ENCODE measurements at regions of chr12 and their contacts with region 1.

Region 1: GRCh38 chr12:13592063-13592942 is 389.1 kb downstream of the GRIN2B start:
- DNase-seq: peak; percentile 51
- ATAC-seq: peak; percentile 86
- H3K4me3 ChIP-seq: no peak overlapping the region
- H3K27ac ChIP-seq: no peak overlapping the region; the same call in 1 of the 2 replicates
- H3K4me1 ChIP-seq: no peaks in the 10 kb centered on the region; the same call in 1 of the 2 replicates
- H3K27me3 ChIP-seq: no peaks in the 10 kb centered on the region
- CTCF ChIP-seq: no peak
- EP300 ChIP-seq: peak; percentile 72 to 81; a peak in 3 of 4 replicates
- POLR2A ChIP-seq: no peak
- RAD21 ChIP-seq: no peak

Region 2: GRCh38 chr12:13472690-13473089 is 119.6 kb before region 1 on chr12:
- CTCF ChIA-PET with region 1: no interaction called
- POLR2A ChIA-PET with region 1: no interaction called
- RAD21 ChIA-PET with region 1: interaction called, 7 read pairs
- SMC1A ChIA-PET with region 1: interaction called, 8 read pairs
- in situ Hi-C with region 1: no loop called
- intact Hi-C with region 1: loop called (anchors 5 kb)
- DNase-seq: peak; percentile 65
- ATAC-seq: peak; percentile 96
- H3K4me3 ChIP-seq: no peak overlapping the region
- H3K27ac ChIP-seq: peak overlapping the region; percentile 68
- H3K4me1 ChIP-seq: peaks cover 13% of the 10 kb centered on the region
- H3K27me3 ChIP-seq: no peaks in the 10 kb centered on the region
- CTCF ChIP-seq: no peak
- EP300 ChIP-seq: peak in 1 of 2 experiments; percentile 72; a peak in 1 of 4 replicates
- POLR2A ChIP-seq: no peak
- RAD21 ChIP-seq: no peak

Region 3: DNA sequence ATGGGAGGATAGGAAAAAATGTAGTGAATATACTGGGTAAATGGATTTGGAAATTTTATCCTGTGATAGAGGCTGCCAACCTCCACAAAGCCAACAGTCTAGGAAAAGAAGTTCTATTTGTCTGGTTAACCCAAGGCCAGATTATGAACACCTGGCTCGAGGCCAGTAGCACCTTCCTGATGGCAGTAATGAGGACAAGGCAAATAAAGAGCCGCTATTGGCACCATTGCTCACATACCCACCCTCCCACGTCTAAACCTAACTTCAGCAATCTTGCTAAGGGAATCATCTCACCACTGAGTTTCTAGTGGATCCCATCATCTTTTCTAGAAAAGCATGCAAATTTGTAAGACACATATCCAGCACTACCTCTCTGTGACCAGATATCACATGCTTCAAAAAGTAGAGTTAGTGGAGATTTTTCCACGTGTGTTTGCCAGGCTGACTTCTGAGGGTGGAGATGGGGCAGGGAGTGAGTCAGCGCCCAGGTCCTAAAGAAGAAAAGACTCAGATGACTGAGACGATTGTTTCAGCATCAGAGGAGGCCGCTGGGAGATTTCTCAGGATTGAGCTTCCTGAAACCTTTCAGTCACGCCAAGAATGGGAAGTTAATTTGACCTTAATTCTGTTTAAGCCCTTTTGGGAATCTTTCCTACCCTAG is 32.9 kb before region 1 on chr12:
- CTCF ChIA-PET with region 1: no interaction called
- POLR2A ChIA-PET with region 1: no interaction called
- RAD21 ChIA-PET with region 1: no interaction called
- SMC1A ChIA-PET with region 1: no interaction called
- in situ Hi-C with region 1: no loop called
- intact Hi-C with region 1: no loop called
- DNase-seq: no peak
- ATAC-seq: no peak
- H3K4me3 ChIP-seq: no peak overlapping the region
- H3K27ac ChIP-seq: no peak overlapping the region
- H3K4me1 ChIP-seq: no peaks in the 10 kb centered on the region
- H3K27me3 ChIP-seq: no peaks in the 10 kb centered on the region; a peak in 1 of 4 replicates
- CTCF ChIP-seq: no peak
- EP300 ChIP-seq: no peak
- POLR2A ChIP-seq: no peak
- RAD21 ChIP-seq: no peak

Region 4: GRCh38 chr12:13581031-13581430 is 11.3 kb before region 1 on chr12:
- CTCF ChIA-PET with region 1: interaction called, 7 read pairs
- POLR2A ChIA-PET with region 1: interaction called, 7 read pairs
- RAD21 ChIA-PET with region 1: interaction called, 4 read pairs
- SMC1A ChIA-PET with region 1: interaction called, 25 read pairs
- in situ Hi-C with region 1: no loop called
- intact Hi-C with region 1: no loop called
- DNase-seq: no peak
- ATAC-seq: no peak
- H3K4me3 ChIP-seq: no peak overlapping the region
- H3K27ac ChIP-seq: no peak overlapping the region
- H3K4me1 ChIP-seq: no peaks in the 10 kb centered on the region
- H3K27me3 ChIP-seq: peaks cover 0 to 4% of the 10 kb centered on the region in 2 experiments; a peak in 1 of 4 replicates
- CTCF ChIP-seq: no peak
- EP300 ChIP-seq: no peak
- POLR2A ChIP-seq: no peak
- RAD21 ChIP-seq: no peak

Region 5: GRCh38 chr12:13631873-13632272 is 39.6 kb after region 1 on chr12:
- CTCF ChIA-PET with region 1: interaction called, 5 read pairs
- POLR2A ChIA-PET with region 1: interaction called, 5 read pairs
- RAD21 ChIA-PET with region 1: interaction called, 10 read pairs
- SMC1A ChIA-PET with region 1: interaction called, 4 read pairs
- in situ Hi-C with region 1: no loop called
- intact Hi-C with region 1: loop called (anchors 2 kb)
- DNase-seq: peak; percentile 65
- ATAC-seq: peak; percentile 88
- H3K4me3 ChIP-seq: no peak overlapping the region
- H3K27ac ChIP-seq: no peak overlapping the region
- H3K4me1 ChIP-seq: no peaks in the 10 kb centered on the region
- H3K27me3 ChIP-seq: no peaks in the 10 kb centered on the region
- CTCF ChIP-seq: no peak
- EP300 ChIP-seq: peak; percentile 72 to 74; a peak in 3 of 4 replicates
- POLR2A ChIP-seq: no peak
- RAD21 ChIP-seq: no peak